CD4-positive, alpha-beta T cell (primary cell): ENCODE measurements at regions of chr12 and their contacts with region 1.

Region 1: DNA sequence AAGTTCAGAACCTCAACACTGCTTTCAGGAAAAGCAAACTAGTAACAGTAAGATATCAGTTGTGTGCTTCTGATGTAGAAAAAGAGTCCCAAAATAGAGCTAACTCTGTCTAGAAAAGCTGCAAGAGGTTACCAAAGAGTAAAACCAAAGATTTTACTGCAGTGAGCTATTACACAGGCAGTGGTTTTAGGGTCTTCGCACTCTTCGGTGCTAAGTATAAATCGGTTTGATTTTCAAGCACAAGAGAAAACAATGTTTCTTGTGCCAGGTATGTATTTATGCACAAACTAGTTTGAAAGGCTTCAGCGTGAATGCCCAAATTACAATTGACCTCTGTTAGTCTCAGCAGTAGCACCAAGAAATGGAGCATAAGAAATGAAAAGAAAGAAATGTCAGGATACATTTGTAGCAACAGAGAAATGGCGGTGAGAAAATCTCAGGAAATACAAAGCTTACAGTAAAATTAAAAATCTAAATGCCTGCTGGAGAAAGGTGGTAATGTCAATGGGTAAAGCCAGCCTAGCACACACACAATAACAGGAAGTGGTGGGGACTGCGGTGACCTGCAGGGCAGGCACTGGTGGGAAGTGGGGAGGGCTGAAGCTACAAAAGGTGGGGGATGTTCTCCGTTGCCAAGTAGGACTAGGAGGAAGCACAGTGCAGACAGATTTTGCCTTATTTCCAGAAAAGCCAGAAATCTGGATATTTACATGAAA is 18.0 kb upstream of the DYRK2 start:
- DNase-seq: peak; percentile 67 to 98 (median 86)
- ATAC-seq: peak; percentile 99
- H3K4me3 ChIP-seq: peak overlapping the region; percentile 19
- H3K4me3 Mint-ChIP-seq: peak overlapping the region; percentile 73
- H3K27ac ChIP-seq: peak overlapping the region; percentile 69 to 77
- H3K27ac Mint-ChIP-seq: peak overlapping the region; percentile 90
- H3K4me1 ChIP-seq: peaks cover 44% of the 10 kb centered on the region
- H3K4me1 Mint-ChIP-seq: peaks cover 91% of the 10 kb centered on the region
- H3K27me3 ChIP-seq: no peaks in the 10 kb centered on the region
- H3K27me3 Mint-ChIP-seq: no peaks in the 10 kb centered on the region
- CTCF ChIP-seq: no peak

Region 2: GRCh38 chr12:67441736-67442346 is 188.7 kb before region 1 on chr12:
- CTCF ChIA-PET with region 1: interaction called, 3 read pairs
- POLR2A ChIA-PET with region 1: interaction called, 4 read pairs
- intact Hi-C with region 1: loop called in 1 of 2 experiments (anchors 2 kb)
- DNase-seq: peak; percentile 64 to 87 (median 74)
- ATAC-seq: peak; percentile 96
- H3K4me3 ChIP-seq: no peak overlapping the region
- H3K4me3 Mint-ChIP-seq: peak overlapping the region; percentile 77
- H3K27ac ChIP-seq: no peak overlapping the region
- H3K27ac Mint-ChIP-seq: peak overlapping the region; percentile 10
- H3K4me1 ChIP-seq: peaks cover 14% of the 10 kb centered on the region
- H3K4me1 Mint-ChIP-seq: peaks cover 32% of the 10 kb centered on the region
- H3K27me3 ChIP-seq: no peaks in the 10 kb centered on the region
- H3K27me3 Mint-ChIP-seq: no peaks in the 10 kb centered on the region
- CTCF ChIP-seq: peak; percentile 84

Region 3: GRCh38 chr12:67515679-67516340 is 114.7 kb before region 1 on chr12:
- CTCF ChIA-PET with region 1: no interaction called
- POLR2A ChIA-PET with region 1: interaction called, 18 read pairs
- intact Hi-C with region 1: loop called in 1 of 2 experiments (anchors 5 kb)
- DNase-seq: peak in 11 of 14 experiments; percentile 5 to 88 (median 30)
- ATAC-seq: peak; percentile 88
- H3K4me3 ChIP-seq: peak overlapping the region; percentile 11
- H3K4me3 Mint-ChIP-seq: peak overlapping the region; percentile 34
- H3K27ac ChIP-seq: peak overlapping the region in 1 of 2 donors; percentile 1
- H3K27ac Mint-ChIP-seq: peak overlapping the region; percentile 57
- H3K4me1 ChIP-seq: peaks cover 52% of the 10 kb centered on the region
- H3K4me1 Mint-ChIP-seq: peaks cover 56% of the 10 kb centered on the region
- H3K27me3 ChIP-seq: no peaks in the 10 kb centered on the region
- H3K27me3 Mint-ChIP-seq: no peaks in the 10 kb centered on the region
- CTCF ChIP-seq: no peak

Region 4: GRCh38 chr12:67578976-67579661 is 51.4 kb before region 1 on chr12:
- CTCF ChIA-PET with region 1: interaction called, 7 read pairs
- POLR2A ChIA-PET with region 1: interaction called, 60 read pairs
- intact Hi-C with region 1: loop called in 1 of 2 experiments (anchors 1 kb)
- DNase-seq: peak in 6 of 14 experiments; percentile 4 to 88 (median 46)
- ATAC-seq: peak; percentile 79
- H3K4me3 ChIP-seq: peak overlapping the region; percentile 1
- H3K4me3 Mint-ChIP-seq: peak overlapping the region; percentile 58
- H3K27ac ChIP-seq: peak overlapping the region in 1 of 2 donors; percentile 32
- H3K27ac Mint-ChIP-seq: peak overlapping the region; percentile 22
- H3K4me1 ChIP-seq: peaks cover 22% of the 10 kb centered on the region
- H3K4me1 Mint-ChIP-seq: peaks cover 63% of the 10 kb centered on the region
- H3K27me3 ChIP-seq: no peaks in the 10 kb centered on the region
- H3K27me3 Mint-ChIP-seq: no peaks in the 10 kb centered on the region
- CTCF ChIP-seq: no peak

Region 5: GRCh38 chr12:67609226-67609870 is 21.2 kb before region 1 on chr12:
- CTCF ChIA-PET with region 1: no interaction called
- POLR2A ChIA-PET with region 1: interaction called, 10 read pairs
- intact Hi-C with region 1: no loop called
- DNase-seq: no peak
- ATAC-seq: no peak
- H3K4me3 ChIP-seq: no peak overlapping the region
- H3K4me3 Mint-ChIP-seq: no peak overlapping the region
- H3K27ac ChIP-seq: no peak overlapping the region
- H3K27ac Mint-ChIP-seq: no peak overlapping the region
- H3K4me1 ChIP-seq: no peaks in the 10 kb centered on the region
- H3K4me1 Mint-ChIP-seq: peaks cover under 1% of the 10 kb centered on the region
- H3K27me3 ChIP-seq: no peaks in the 10 kb centered on the region
- H3K27me3 Mint-ChIP-seq: no peaks in the 10 kb centered on the region
- CTCF ChIP-seq: no peak